Right lobe of liver (tissue), 6 donors: ENCODE measurements at regions of chr2 and their contacts with region 1.

Region 1: GRCh38 chr2:69946351-69947077 is 14.9 kb downstream of the ASPRV1 start:
- DNase-seq: no peak
- ATAC-seq: peak; percentile 40 to 57 (median 50)
- H3K4me3 ChIP-seq: no peak overlapping the region
- H3K27ac ChIP-seq: peak overlapping the region in 1 of 3 donors; percentile 28
- H3K4me1 ChIP-seq: no peaks in the 10 kb centered on the region
- H3K27me3 ChIP-seq: no peaks in the 10 kb centered on the region
- CTCF ChIP-seq: no peak
- POLR2A ChIP-seq: no peak

Region 2: DNA sequence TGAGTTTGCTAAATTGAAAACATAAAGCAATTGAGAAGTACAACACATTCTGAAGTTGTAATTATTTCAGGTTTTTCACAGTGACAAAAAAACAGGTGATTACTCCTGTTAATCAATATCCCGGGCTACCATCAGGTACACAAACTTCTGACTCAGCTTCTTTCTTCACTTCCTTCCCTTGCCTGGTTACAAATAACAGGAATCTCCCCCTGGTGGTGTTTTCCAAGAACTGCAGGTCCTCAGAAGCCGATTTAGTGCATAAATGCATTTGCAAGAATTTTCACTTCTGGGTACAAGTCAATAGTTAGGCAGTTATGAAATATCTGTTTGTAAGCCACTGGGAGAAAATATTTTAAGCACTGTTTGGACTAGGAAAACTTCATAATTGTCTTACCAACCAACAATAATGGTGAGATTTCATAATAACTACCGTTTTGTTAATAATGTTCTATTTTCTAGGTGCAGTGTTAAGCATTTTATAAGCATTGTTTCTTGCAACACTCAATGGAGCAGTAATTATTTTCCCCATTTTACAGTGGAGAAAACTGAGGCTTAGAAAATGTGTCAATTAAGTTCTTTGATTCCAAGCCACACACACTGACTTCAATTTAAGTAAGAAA is 129.5 kb before region 1 on chr2:
- intact Hi-C with region 1: no loop called
- DNase-seq: peak in 1 of 3 donors; percentile 82
- ATAC-seq: peak; percentile 88 to 97 (median 94)
- H3K4me3 ChIP-seq: no peak overlapping the region
- H3K27ac ChIP-seq: peak overlapping the region in 1 of 3 donors; percentile 11
- H3K4me1 ChIP-seq: peaks cover 0 to 15% (median 8%) of the 10 kb centered on the region in 4 donors
- H3K27me3 ChIP-seq: no peaks in the 10 kb centered on the region
- CTCF ChIP-seq: peak; percentile 94 to 100 (median 96)
- POLR2A ChIP-seq: no peak

Region 3: DNA sequence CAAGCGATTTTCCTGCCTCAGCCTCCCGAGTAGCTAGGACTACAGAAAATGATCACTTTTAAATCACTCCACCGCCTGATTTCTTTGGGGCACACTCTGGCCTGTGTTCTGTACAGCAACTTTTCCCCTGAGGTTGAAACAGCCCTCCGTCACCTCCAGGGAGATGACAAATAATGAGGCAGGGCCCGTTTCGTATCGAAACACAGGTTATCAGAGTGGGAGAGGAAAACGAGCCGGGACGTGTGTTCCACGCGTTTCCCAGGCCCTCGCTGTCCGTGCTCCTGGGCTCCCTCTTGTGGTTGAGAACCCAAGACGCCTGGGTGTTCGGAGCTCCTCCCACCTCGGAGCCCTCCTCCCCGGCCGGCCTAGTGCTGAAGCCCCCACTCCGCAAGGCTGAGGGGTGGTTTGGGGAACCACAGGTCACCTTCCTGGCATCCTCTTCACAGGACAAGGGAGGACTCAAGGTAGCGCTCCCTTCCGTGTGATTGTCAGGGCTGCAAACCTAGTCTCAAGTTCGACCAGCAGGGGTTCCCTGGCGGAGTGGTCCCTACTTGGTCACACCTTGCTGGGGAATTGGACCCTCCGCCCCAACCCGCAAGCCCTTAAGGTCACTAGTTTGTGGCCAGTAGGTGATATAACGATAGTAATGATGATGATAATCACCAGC is 1002.0 kb after region 1 on chr2:
- intact Hi-C with region 1: loop called in 1 of 2 experiments (anchors 10 kb)
- DNase-seq: peak; percentile 79 to 82 (median 81)
- ATAC-seq: peak; percentile 97 to 99 (median 98)
- H3K4me3 ChIP-seq: peak overlapping the region in 2 of 3 donors; percentile 18 to 39
- H3K27ac ChIP-seq: no peak overlapping the region
- H3K4me1 ChIP-seq: peaks cover 0 to 7% (median 0%) of the 10 kb centered on the region in 4 donors
- H3K27me3 ChIP-seq: peaks cover 0 to 3% of the 10 kb centered on the region in 2 donors
- CTCF ChIP-seq: peak; percentile 62 to 88 (median 86)
- POLR2A ChIP-seq: no peak